ENCODE measurements at regions of chr5 and their contacts with region 1.

Region 1: GRCh38 chr5:81207009-81207408 is 26.1 kb upstream of the CKMT2 start:
- DNase-seq: no peak
- ATAC-seq: peak in 2 of 4 donors; percentile 49 to 56
- H3K4me3 ChIP-seq: no peak overlapping the region
- H3K27ac ChIP-seq: no peak overlapping the region
- H3K4me1 ChIP-seq: peaks cover 0 to 5% (median 0%) of the 10 kb centered on the region in 12 donors
- H3K27me3 ChIP-seq: no peaks in the 10 kb centered on the region
- CTCF ChIP-seq: peak in 4 of 12 donors; percentile 14 to 37 (median 21)
- POLR2A ChIP-seq: no peak

Region 2: DNA sequence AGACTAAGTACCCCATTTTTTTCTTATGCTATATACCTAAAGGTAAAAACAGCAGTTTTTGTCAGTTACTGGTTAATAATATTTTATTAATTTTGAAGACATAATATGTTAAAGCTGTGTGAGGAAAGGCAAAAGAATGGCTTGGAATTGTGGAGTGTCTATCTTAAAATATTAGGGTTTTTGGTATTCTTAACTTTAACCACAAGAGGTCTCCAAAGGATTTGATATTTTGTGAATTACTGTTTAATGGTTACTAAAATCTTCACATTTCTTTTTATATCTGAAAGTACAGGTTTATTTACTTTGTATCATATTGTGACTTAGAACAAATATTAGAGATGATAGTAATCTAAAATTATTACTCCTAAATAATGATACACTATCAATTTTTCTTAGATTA is 520.3 kb before region 1 on chr5:
- intact Hi-C with region 1: loop called in 1 of 10 experiments (anchors 10 kb)
- DNase-seq: no peak
- ATAC-seq: no peak
- H3K4me3 ChIP-seq: no peak overlapping the region
- H3K27ac ChIP-seq: no peak overlapping the region
- H3K4me1 ChIP-seq: no peaks in the 10 kb centered on the region
- H3K27me3 ChIP-seq: no peaks in the 10 kb centered on the region
- CTCF ChIP-seq: peak in 11 of 12 donors; percentile 17 to 53 (median 33)
- POLR2A ChIP-seq: no peak

Region 3: DNA sequence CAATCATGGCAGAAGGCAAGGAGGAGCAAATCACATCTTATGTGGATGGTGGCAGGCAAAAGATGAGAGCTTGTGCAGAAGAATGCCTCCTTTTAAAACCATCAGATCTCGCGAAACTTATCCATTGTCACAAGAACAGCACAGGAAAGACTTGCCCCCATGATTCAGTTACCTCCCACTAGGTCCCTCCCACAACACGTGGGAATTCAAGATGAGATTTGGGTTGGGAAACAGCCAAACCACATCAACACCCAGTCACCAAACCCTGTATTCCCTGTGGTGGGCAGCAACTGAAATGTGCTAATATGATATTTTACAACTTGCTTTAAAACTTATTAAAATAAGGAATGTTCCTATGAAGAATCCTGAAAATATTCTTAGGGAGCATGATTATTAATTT is 192.7 kb before region 1 on chr5:
- intact Hi-C with region 1: no loop called
- DNase-seq: no peak
- ATAC-seq: no peak
- H3K4me3 ChIP-seq: no peak overlapping the region
- H3K27ac ChIP-seq: no peak overlapping the region
- H3K4me1 ChIP-seq: peaks cover 0 to 17% (median 0%) of the 10 kb centered on the region in 12 donors
- H3K27me3 ChIP-seq: no peaks in the 10 kb centered on the region
- CTCF ChIP-seq: no peak
- POLR2A ChIP-seq: no peak

Region 4: DNA sequence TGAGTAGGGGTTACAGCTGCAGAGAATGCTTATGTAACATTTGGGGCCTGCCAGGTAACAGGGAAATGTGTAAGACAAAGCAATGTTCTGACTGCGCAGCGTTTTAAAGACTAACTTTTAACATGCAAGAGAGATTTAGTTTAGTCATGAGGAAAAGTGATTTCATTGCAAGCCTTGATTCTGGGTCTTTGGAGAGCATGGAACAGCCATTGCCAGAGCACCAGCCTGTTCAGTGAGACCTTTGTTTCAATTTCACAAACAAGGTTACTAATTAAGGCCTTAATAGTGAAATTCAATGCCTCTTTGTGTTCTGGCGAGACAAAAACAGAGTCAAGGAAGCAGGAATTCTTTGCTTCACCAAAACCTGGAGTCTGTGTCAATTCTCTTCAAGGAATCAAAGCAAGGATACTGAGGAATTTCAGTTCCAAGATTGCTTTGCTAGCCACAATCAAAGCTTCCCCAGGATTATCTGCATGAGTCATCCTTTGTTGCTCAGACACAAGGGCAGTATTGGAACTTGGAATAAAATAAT is 40.5 kb after region 1 on chr5:
- intact Hi-C with region 1: no loop called
- DNase-seq: no peak
- ATAC-seq: no peak
- H3K4me3 ChIP-seq: no peak overlapping the region
- H3K27ac ChIP-seq: peak overlapping the region in 8 of 12 donors; percentile 2 to 95 (median 25)
- H3K4me1 ChIP-seq: peaks cover 5 to 98% (median 62%) of the 10 kb centered on the region in 12 donors
- H3K27me3 ChIP-seq: no peaks in the 10 kb centered on the region
- CTCF ChIP-seq: no peak
- POLR2A ChIP-seq: no peak

Region 5: GRCh38 chr5:81292130-81292529 is 85.1 kb after region 1 on chr5:
- intact Hi-C with region 1: loop called in 1 of 10 experiments (anchors 10 kb)
- DNase-seq: no peak
- ATAC-seq: no peak
- H3K4me3 ChIP-seq: no peak overlapping the region
- H3K27ac ChIP-seq: no peak overlapping the region
- H3K4me1 ChIP-seq: peaks cover 0 to 1% (median 0%) of the 10 kb centered on the region in 12 donors
- H3K27me3 ChIP-seq: no peaks in the 10 kb centered on the region
- CTCF ChIP-seq: no peak
- POLR2A ChIP-seq: no peak